AG04449 (cell line): ENCODE measurements at regions of chr9 and their contacts with region 1.

Region 1: GRCh38 chr9:97468658-97469448 is 32.6 kb upstream of the TMOD1 start:
- DNase-seq: no peak
- H3K4me3 ChIP-seq: no peak overlapping the region
- CTCF ChIP-seq: peak; percentile 77

Region 2: DNA sequence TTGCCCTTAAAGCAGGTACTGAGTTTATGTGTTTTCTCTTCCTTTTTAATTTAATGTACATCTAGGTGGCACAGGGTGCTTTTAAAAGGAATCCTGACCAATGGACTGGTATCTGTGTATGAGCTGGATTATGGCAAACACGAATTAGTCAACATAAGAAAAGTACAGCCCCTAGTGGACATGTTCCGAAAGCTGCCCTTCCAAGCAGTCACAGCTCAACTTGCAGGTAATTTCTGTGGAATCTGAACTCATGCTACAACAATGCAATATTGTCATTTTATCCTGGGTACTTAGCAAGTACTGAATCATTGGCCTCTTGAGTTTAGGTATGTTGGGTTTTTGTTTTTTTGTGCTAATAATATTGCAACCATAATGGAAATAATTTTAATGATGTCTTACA is 18.3 kb after region 1 on chr9:
- CTCF ChIA-PET with region 1: interaction called, 53 read pairs
- POLR2A ChIA-PET with region 1: no interaction called
- DNase-seq: no peak
- H3K4me3 ChIP-seq: no peak overlapping the region
- CTCF ChIP-seq: peak; percentile 19

Region 3: GRCh38 chr9:97632985-97633858 is 164.4 kb after region 1 on chr9 and contains the starts of genes NCBP1 and TSTD2:
- CTCF ChIA-PET with region 1: interaction called, 11 read pairs
- POLR2A ChIA-PET with region 1: no interaction called
- DNase-seq: peak; percentile 86
- H3K4me3 ChIP-seq: peak within 1 kb of the TSS; percentile 92
- CTCF ChIP-seq: no peak

Region 4: GRCh38 chr9:98455256-98456155 is 986.7 kb after region 1 on chr9:
- CTCF ChIA-PET with region 1: no interaction called
- POLR2A ChIA-PET with region 1: no interaction called
- DNase-seq: no peak
- H3K4me3 ChIP-seq: no peak overlapping the region
- CTCF ChIP-seq: no peak